Caco-2 (cell line): ENCODE measurements at regions of chr1 and their contacts with region 1.

Region 1: GRCh38 chr1:78045926-78046778 is at the start of gene GIPC2:
- DNase-seq: peak; percentile 58 to 62
- H3K4me3 ChIP-seq: peak within 1 kb of the TSS; percentile 82
- H3K4me3 Mint-ChIP-seq: peak within 1 kb of the TSS; percentile 77
- H3K27ac Mint-ChIP-seq: peak within 1 kb of the TSS; percentile 70
- H3K4me1 ChIP-seq: 0 out of 2 replicates have a peak, but pooled peaks cover 3% of the 10 kb centered on the region
- H3K4me1 Mint-ChIP-seq: peaks cover 7% of the 10 kb centered on the region
- H3K27me3 ChIP-seq: no peaks in the 10 kb centered on the region
- H3K27me3 Mint-ChIP-seq: no peaks in the 10 kb centered on the region
- CTCF ChIP-seq: peak in 1 of 2 experiments; percentile 6
- total RNA-seq, gene GIPC2: 4.3 and 4.4 TPM in 2 replicates

Region 2: DNA sequence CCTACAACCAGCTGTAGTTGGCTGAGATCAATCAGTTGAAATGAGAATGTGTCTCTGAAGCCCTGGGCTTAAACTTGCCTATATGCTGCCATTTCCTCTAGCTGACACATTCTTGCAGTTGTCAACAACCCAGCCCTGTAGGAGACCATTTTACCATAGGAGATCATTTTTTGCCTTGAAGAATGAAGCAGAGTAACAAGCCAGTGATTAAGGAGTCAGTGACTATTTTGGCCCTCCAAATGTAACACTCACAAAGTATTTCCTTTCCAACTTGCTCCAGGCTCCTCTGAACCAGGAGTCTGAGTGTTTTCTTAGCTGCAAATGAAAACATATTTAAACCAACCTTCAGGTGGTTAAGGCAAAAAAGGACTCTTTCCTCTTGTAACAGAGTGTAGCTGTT is 547.2 kb before region 1 on chr1:
- CTCF ChIA-PET with region 1: no interaction called
- POLR2A ChIA-PET with region 1: no interaction called
- intact Hi-C with region 1: no loop called
- DNase-seq: no peak
- H3K4me3 ChIP-seq: no peak overlapping the region
- H3K4me3 Mint-ChIP-seq: no peak overlapping the region
- H3K27ac Mint-ChIP-seq: no peak overlapping the region
- H3K4me1 ChIP-seq: no peaks in the 10 kb centered on the region
- H3K4me1 Mint-ChIP-seq: no peaks in the 10 kb centered on the region
- H3K27me3 ChIP-seq: no peaks in the 10 kb centered on the region
- H3K27me3 Mint-ChIP-seq: no peaks in the 10 kb centered on the region
- CTCF ChIP-seq: no peak

Region 3: DNA sequence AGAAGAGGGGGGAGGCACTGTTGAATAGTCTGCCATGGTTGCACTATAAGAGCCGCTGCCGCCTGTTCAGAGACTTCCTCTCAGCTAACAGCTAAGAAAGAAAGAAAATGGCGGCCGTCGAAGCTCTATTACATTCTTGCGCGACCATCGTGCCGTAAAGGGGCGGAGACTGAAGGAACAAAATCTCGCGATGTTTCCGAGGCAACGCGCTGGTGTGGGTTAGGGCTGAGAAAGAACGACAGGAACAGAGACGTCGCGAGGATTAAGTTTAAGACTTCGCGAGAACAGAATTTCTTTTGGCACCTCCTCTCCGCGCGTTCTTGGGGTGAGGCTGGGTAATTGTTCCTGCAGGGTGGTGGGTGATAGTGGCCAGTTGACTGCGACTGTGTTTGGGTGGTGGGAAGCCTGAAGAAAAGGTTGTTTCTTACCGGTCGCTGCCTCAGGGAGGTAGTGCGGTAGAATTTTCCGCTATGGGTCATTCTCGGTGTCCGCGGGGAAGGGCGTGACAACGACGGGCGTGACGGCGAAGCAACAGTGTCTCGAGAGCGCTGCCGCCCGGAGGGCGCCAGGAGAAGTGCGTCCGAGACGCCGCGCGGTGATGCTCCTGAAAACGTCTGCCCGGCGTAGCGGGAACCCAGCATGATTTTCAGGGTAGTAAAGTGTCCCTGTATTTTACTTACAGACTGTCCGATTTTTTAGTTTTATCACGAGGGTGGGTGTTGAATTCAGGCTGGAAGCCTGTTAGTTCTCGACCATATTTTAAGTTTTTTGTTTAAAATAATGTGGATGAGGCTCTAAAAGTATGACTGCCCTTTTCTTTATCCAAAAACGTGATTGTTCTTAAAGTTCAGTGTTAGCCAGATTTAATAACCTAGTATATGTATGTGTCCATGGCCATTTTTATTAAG is 66.9 kb before region 1 on chr1 and contains the start of gene FUBP1:
- CTCF ChIA-PET with region 1: no interaction called
- POLR2A ChIA-PET with region 1: no interaction called
- intact Hi-C with region 1: loop called (anchors 5 kb)
- DNase-seq: peak; percentile 91 to 95
- H3K4me3 ChIP-seq: peak within 1 kb of the TSS; percentile 89
- H3K4me3 Mint-ChIP-seq: no peak within 1 kb of the TSS
- H3K27ac Mint-ChIP-seq: no peak within 1 kb of the TSS
- H3K4me1 ChIP-seq: peaks cover 24% of the 10 kb centered on the region
- H3K4me1 Mint-ChIP-seq: no peaks in the 10 kb centered on the region
- H3K27me3 ChIP-seq: no peaks in the 10 kb centered on the region
- H3K27me3 Mint-ChIP-seq: no peaks in the 10 kb centered on the region
- CTCF ChIP-seq: peak; percentile 35 to 66
- total RNA-seq, gene FUBP1: 90.1 and 92.6 TPM in 2 replicates

Region 4: DNA sequence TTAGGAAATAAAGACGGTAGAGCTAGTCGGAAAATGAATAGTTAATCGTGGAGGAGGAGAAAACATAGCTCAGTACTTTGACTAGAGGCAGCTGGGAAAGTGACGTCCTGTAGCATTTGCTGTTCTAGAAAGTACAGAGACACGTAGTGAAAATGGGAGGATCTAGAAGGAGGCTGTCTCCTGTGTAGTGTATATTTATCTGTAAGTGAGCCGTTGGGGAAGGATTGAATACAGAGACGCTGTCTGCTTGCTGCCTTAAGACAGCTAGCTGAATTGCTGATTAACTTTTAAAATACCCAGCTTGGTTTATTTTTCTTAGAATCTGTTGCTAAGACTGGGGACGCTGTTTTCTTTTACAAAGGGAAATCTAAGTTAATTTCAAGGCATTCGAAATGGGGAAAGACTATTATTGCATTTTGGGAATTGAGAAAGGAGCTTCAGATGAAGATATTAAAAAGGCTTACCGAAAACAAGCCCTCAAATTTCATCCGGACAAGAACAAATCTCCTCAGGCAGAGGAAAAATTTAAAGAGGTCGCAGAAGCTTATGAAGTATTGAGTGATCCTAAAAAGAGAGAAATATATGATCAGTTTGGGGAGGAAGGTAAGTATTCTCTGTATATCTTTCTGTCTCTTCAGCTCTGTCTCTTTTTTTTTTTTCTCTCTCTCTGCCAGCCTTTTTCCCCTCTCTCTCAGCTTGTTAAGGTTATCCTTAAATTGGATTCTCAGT is 41.3 kb before region 1 on chr1 and contains the start of gene DNAJB4:
- CTCF ChIA-PET with region 1: no interaction called
- POLR2A ChIA-PET with region 1: interaction called, 15 read pairs
- intact Hi-C with region 1: loop called (anchors 1 kb)
- DNase-seq: peak; percentile 69 to 80
- H3K4me3 ChIP-seq: peak within 1 kb of the TSS; percentile 32
- H3K4me3 Mint-ChIP-seq: peak within 1 kb of the TSS; percentile 79
- H3K27ac Mint-ChIP-seq: peak within 1 kb of the TSS; percentile 90
- H3K4me1 ChIP-seq: no peaks in the 10 kb centered on the region
- H3K4me1 Mint-ChIP-seq: no peaks in the 10 kb centered on the region
- H3K27me3 ChIP-seq: no peaks in the 10 kb centered on the region
- H3K27me3 Mint-ChIP-seq: no peaks in the 10 kb centered on the region
- CTCF ChIP-seq: no peak
- total RNA-seq, gene DNAJB4: 5.4 and 6.5 TPM in 2 replicates